Endothelial cell of umbilical vein (primary cell): ENCODE measurements at regions of chr7 and their contacts with region 1.

Region 1: DNA sequence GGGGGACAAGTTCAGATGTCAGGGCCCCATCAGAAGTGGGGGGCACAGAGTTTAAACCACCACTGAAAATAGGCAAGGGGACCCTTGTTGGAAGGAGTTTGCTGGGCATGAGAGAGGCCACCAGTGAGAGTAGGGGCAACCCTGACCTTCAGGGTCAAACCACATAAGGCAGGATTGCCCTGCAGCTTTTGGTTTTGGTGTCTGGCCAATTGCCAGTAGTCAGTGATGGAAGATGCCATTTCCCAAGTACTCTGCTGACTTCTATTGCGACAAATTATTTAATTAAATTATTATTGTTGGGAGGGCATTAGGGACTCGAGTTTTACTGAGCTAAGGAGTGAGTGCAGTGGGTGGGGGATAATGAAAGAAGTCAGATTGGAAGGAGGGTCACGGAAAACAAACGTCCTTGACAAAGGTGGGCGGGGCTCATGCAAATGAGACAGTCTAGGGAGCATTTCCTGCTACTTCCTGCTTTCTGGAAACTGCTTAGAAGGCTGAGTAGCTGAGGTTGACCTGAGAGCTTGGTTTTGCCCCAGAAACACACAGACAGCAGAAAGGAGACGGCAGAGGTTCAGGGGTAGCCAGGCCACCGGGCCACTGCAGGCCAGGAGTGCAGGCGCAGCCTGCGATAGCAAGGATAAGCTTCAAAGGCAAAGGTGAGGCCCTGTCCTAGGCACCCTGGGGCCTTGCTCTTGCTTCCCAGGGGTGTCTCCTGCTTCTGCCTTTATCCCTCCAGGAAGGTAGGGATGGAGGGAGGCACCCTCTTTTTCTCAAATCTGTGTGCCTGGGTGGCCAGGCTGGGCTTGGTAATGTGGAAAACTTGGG is 74.1 kb upstream of the ANLN start:
- DNase-seq: no peak
- H3K4me3 ChIP-seq: no peak overlapping the region
- H3K27ac ChIP-seq: no peak overlapping the region
- H3K4me1 ChIP-seq: peaks cover 5% of the 10 kb centered on the region
- H3K27me3 ChIP-seq: peaks cover 0 to 3% of the 10 kb centered on the region in 2 experiments
- CTCF ChIP-seq: no peak
- POLR2A ChIP-seq: no peak

Region 2: DNA sequence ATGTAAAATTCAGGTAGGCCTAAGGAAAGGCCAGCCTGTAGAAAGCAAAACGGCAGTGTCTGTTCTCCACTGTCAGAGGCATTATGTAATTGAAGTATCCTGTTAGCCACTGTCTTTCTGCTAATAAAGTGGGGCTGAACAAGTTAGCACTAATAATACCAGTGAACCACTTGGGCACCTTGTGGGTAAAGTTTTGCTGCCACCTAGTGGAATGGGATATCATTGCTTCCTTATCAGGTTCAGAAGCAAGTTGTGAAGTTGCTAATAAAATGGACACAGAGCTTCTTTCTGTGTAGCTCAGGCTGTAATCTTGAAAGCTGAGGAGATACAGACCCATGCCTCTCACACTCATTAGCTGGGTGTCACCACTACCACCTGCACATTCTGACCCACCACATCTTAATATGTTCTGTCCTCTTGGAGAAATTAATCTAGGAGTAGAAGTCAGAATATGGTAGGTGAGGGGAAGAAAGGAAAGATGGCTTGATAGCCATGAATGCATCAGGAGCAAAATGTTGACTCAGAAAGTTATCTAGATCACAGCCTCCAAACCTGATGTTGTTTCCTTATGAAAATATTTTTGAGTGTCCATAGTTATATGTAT is 339.6 kb before region 1 on chr7:
- CTCF ChIA-PET with region 1: interaction called, 14 read pairs
- POLR2A ChIA-PET with region 1: no interaction called
- dilution Hi-C with region 1: no loop called
- intact Hi-C with region 1: no loop called
- DNase-seq: peak; percentile 78
- H3K4me3 ChIP-seq: no peak overlapping the region
- H3K27ac ChIP-seq: no peak overlapping the region
- H3K4me1 ChIP-seq: no peaks in the 10 kb centered on the region
- H3K27me3 ChIP-seq: peaks cover 3 to 7% of the 10 kb centered on the region in 2 experiments
- CTCF ChIP-seq: peak; percentile 55 to 69
- POLR2A ChIP-seq: no peak

Region 3: DNA sequence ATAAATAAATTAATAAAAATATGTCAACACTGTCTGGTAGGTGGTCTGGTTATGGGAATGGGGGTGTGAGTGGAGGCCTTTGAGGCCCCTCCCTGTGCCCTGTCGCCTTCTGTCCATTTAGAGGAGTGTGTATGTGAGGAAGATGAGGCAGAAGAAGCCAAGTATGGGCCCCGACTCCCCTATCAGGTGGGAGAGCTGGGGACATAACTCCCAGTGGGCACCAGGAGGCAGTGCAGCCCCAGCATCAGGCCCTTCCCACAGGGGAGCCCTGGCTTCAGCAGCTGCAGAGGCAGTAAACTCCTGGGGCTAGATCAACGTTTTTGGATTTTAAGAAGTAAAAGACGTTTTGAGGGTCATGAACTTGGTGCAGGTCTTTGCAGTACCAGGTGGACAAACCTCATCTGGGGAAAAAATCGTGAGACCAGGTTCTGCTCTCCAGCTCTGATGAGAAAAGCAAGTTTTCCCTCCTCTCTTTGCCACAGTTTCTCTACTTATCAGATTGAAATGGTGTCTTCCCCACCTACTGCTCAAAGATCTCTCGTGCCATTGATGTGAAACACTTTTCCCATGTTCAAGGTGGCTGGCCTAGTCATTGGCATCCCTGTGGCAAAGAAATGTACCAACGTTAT is 330.3 kb before region 1 on chr7:
- CTCF ChIA-PET with region 1: interaction called, 114 read pairs
- POLR2A ChIA-PET with region 1: no interaction called
- dilution Hi-C with region 1: no loop called
- intact Hi-C with region 1: loop called (anchors 1 kb)
- DNase-seq: peak; percentile 67
- H3K4me3 ChIP-seq: no peak overlapping the region
- H3K27ac ChIP-seq: no peak overlapping the region
- H3K4me1 ChIP-seq: no peaks in the 10 kb centered on the region
- H3K27me3 ChIP-seq: no peaks in the 10 kb centered on the region
- CTCF ChIP-seq: peak; percentile 87 to 90
- POLR2A ChIP-seq: no peak

Region 4: DNA sequence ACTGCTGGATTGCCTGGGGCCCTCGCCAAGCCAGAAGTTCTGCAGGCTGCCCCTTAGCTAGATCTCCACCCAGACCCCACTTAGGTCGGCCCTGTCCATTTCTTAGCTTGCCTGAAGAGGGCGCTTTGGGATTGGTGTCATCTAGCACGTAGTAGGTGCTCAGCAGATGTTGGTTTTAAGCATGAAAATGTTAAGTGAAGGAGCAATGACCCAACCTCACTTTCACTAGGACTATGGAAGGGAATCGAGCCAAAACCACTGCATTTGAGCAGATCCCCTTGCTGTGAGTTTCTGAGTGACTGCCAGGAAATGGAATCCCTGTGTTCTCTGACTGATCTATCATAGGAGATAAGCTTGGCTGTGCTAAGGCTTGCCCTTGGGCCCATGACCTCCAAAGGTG is 294.2 kb before region 1 on chr7:
- CTCF ChIA-PET with region 1: interaction called, 15 read pairs
- POLR2A ChIA-PET with region 1: no interaction called
- dilution Hi-C with region 1: no loop called
- intact Hi-C with region 1: no loop called
- DNase-seq: peak; percentile 23
- H3K4me3 ChIP-seq: no peak overlapping the region
- H3K27ac ChIP-seq: no peak overlapping the region
- H3K4me1 ChIP-seq: no peaks in the 10 kb centered on the region
- H3K27me3 ChIP-seq: peaks cover 9 to 24% of the 10 kb centered on the region in 2 experiments
- CTCF ChIP-seq: peak; percentile 46 to 53
- POLR2A ChIP-seq: no peak

Region 5: DNA sequence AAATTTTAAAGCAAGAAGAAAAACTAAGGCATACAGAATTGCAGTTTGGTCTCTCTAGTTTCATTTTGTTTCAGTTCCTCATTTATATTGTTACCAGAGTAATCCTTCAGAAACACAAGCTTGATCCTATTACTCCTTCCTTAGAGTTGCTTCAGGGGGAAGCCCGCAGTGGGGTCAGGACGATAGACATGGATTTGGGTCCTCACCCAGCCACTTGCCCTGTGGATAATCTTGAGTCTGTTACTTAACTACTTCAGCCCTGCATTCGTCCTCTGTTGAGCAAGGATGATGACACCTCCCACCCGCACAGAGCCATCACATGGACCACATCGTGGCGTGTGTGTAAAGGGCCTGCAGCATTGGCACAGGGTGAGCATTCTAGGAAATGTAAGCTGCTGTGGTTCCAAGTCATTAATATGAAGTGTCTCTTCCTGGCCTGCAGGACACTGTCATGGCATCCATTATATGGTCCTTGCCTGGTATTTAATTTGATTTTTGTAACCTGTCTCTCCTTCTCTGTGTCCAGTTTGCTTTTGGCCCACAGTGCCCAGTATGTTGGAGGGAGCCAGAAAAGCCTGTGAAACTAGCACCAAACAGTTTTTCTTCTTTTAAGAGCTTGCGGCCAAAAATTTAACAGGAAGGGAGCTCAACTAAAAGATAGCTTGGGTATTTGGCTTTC is 51.3 kb before region 1 on chr7:
- CTCF ChIA-PET with region 1: no interaction called
- POLR2A ChIA-PET with region 1: no interaction called
- dilution Hi-C with region 1: no loop called
- intact Hi-C with region 1: no loop called
- DNase-seq: no peak
- H3K4me3 ChIP-seq: no peak overlapping the region
- H3K27ac ChIP-seq: no peak overlapping the region
- H3K4me1 ChIP-seq: no peaks in the 10 kb centered on the region
- H3K27me3 ChIP-seq: peaks cover 2 to 6% of the 10 kb centered on the region in 2 experiments
- CTCF ChIP-seq: no peak
- POLR2A ChIP-seq: no peak

Region 6: GRCh38 chr7:36303202-36304098 is 12.1 kb before region 1 on chr7:
- CTCF ChIA-PET with region 1: interaction called, 115 read pairs
- POLR2A ChIA-PET with region 1: no interaction called
- dilution Hi-C with region 1: no loop called
- intact Hi-C with region 1: no loop called
- DNase-seq: peak; percentile 54
- H3K4me3 ChIP-seq: no peak overlapping the region
- H3K27ac ChIP-seq: peak overlapping the region; percentile 33
- H3K4me1 ChIP-seq: peaks cover 28% of the 10 kb centered on the region
- H3K27me3 ChIP-seq: no peaks in the 10 kb centered on the region
- CTCF ChIP-seq: no peak
- POLR2A ChIP-seq: no peak

Region 7: GRCh38 chr7:36336390-36336789 is 20.9 kb after region 1 on chr7:
- CTCF ChIA-PET with region 1: interaction called, 12 read pairs
- POLR2A ChIA-PET with region 1: no interaction called
- dilution Hi-C with region 1: no loop called
- intact Hi-C with region 1: no loop called
- DNase-seq: no peak
- H3K4me3 ChIP-seq: no peak overlapping the region
- H3K27ac ChIP-seq: no peak overlapping the region
- H3K4me1 ChIP-seq: no peaks in the 10 kb centered on the region
- H3K27me3 ChIP-seq: no peaks in the 10 kb centered on the region
- CTCF ChIP-seq: no peak
- POLR2A ChIP-seq: no peak